ENCODE measurements at regions of chr2 and their contacts with region 1.

Region 1: DNA sequence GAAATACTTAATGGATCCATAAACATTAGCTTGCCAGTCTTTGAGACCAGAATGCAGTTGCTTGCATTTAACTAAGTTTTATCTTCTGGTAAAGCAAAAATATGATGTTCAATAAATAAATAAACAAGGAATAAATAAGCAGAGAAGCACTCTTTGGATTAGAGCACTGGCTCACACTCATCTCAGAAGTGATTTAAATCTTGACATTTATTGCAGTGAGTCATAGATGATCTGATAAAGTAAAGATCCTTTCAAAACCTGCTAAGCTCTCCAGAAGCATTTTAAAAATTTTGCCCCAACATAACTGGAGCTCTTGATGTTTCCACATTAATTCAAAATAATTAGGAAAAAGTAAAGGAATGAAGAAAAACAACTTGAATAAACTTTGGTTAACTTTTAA is 66.8 kb downstream of the KYNU start:
- DNase-seq: peak; percentile 88
- ATAC-seq: peak; percentile 82
- H3K4me3 ChIP-seq: no peak overlapping the region
- H3K27ac ChIP-seq: peak overlapping the region; percentile 90
- H3K4me1 ChIP-seq: peaks cover 43% of the 10 kb centered on the region
- H3K27me3 ChIP-seq: no peaks in the 10 kb centered on the region
- CTCF ChIP-seq: no peak

Region 2: GRCh38 chr2:142572346-142573132 is 371.7 kb before region 1 on chr2:
- CTCF ChIA-PET with region 1: no interaction called
- POLR2A ChIA-PET with region 1: no interaction called
- intact Hi-C with region 1: no loop called
- DNase-seq: no peak
- ATAC-seq: no peak
- H3K4me3 ChIP-seq: no peak overlapping the region
- H3K27ac ChIP-seq: no peak overlapping the region
- H3K4me1 ChIP-seq: no peaks in the 10 kb centered on the region
- H3K27me3 ChIP-seq: 0 out of 2 replicates have a peak, but pooled peaks cover 9% of the 10 kb centered on the region
- CTCF ChIP-seq: no peak

Region 3: GRCh38 chr2:142813830-142814829 is 130.1 kb before region 1 on chr2:
- CTCF ChIA-PET with region 1: no interaction called
- POLR2A ChIA-PET with region 1: no interaction called
- intact Hi-C with region 1: no loop called
- DNase-seq: no peak
- ATAC-seq: no peak
- H3K4me3 ChIP-seq: no peak overlapping the region
- H3K27ac ChIP-seq: no peak overlapping the region
- H3K4me1 ChIP-seq: no peaks in the 10 kb centered on the region
- H3K27me3 ChIP-seq: no peaks in the 10 kb centered on the region
- CTCF ChIP-seq: no peak

Region 4: GRCh38 chr2:142834021-142834420 is 110.3 kb before region 1 on chr2:
- CTCF ChIA-PET with region 1: no interaction called
- POLR2A ChIA-PET with region 1: no interaction called
- intact Hi-C with region 1: loop called (anchors 2 kb)
- DNase-seq: peak; percentile 76
- ATAC-seq: peak; percentile 90
- H3K4me3 ChIP-seq: peak overlapping the region; percentile 37; the same call in 1 of the 2 replicates
- H3K27ac ChIP-seq: peak overlapping the region; percentile 76
- H3K4me1 ChIP-seq: peaks cover 15% of the 10 kb centered on the region
- H3K27me3 ChIP-seq: no peaks in the 10 kb centered on the region
- CTCF ChIP-seq: no peak

Region 5: GRCh38 chr2:142974288-142975024 is 30.2 kb after region 1 on chr2:
- CTCF ChIA-PET with region 1: no interaction called
- POLR2A ChIA-PET with region 1: interaction called, 3 read pairs
- intact Hi-C with region 1: loop called (anchors 2 kb)
- DNase-seq: peak; percentile 87
- ATAC-seq: peak; percentile 91
- H3K4me3 ChIP-seq: peak overlapping the region; percentile 30; the same call in 1 of the 2 replicates
- H3K27ac ChIP-seq: peak overlapping the region; percentile 77
- H3K4me1 ChIP-seq: peaks cover 28% of the 10 kb centered on the region
- H3K27me3 ChIP-seq: no peaks in the 10 kb centered on the region
- CTCF ChIP-seq: no peak

Region 6: GRCh38 chr2:143121079-143121478 is 176.8 kb after region 1 on chr2:
- CTCF ChIA-PET with region 1: no interaction called
- POLR2A ChIA-PET with region 1: no interaction called
- intact Hi-C with region 1: no loop called
- DNase-seq: no peak
- ATAC-seq: no peak
- H3K4me3 ChIP-seq: no peak overlapping the region
- H3K27ac ChIP-seq: no peak overlapping the region
- H3K4me1 ChIP-seq: no peaks in the 10 kb centered on the region
- H3K27me3 ChIP-seq: peaks cover 20% of the 10 kb centered on the region; the same call in 1 of the 2 replicates
- CTCF ChIP-seq: no peak